ENCODE measurements at regions of chr9 and their contacts with region 1.

Region 1: DNA sequence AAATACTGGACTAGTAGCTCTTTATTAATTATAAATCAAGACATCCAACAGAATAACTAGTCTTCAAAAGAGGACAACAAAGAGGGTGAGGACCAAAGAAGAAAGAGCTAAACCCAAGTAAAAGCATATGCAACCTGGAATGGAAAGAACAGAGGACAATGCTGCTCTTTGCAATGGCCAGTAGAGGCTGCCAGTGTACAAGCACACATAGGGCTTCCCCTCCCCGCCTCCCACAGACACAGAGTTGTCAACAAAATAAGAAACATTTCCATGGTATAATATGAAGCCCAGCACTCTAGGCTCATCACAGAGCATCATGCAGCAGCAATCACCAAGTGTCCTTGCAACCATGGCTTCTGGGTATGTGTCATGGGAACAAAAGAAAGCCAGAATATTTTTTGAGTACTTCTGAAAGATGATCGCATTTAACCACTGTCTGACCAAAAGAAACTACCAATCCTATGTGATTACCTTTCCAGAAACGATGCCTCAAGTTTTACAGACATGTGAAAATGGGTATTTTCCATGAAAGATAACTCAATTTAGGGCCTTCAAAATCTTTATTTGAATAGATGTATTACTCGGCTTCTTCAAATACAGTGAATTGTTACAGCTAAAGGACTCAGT is 58.1 kb downstream of the RFX3 start:
- DNase-seq: no peak
- H3K4me3 ChIP-seq: no peak overlapping the region
- H3K27ac ChIP-seq: no peak overlapping the region
- H3K4me1 ChIP-seq: peaks cover 0 to 6% (median 1%) of the 10 kb centered on the region in 4 experiments; a peak in 4 of 7 replicates
- H3K27me3 ChIP-seq: no peaks in the 10 kb centered on the region
- CTCF ChIP-seq: peak; percentile 72 to 98 (median 72)
- EP300 ChIP-seq: no peak
- POLR2A ChIP-seq: no peak
- RAD21 ChIP-seq: peak; percentile 94 to 96

Region 2: GRCh38 chr9:3479514-3480352 is 12.0 kb after region 1 on chr9:
- CTCF ChIA-PET with region 1: interaction called, 10 read pairs
- POLR2A ChIA-PET with region 1: no interaction called
- DNase-seq: no peak
- H3K4me3 ChIP-seq: no peak overlapping the region
- H3K27ac ChIP-seq: no peak overlapping the region
- H3K4me1 ChIP-seq: peaks cover 0 to 10% (median 6%) of the 10 kb centered on the region in 4 experiments; a peak in 4 of 7 replicates
- H3K27me3 ChIP-seq: no peaks in the 10 kb centered on the region
- CTCF ChIP-seq: peak in 1 of 3 experiments; percentile 12; a peak in 1 of 4 replicates
- EP300 ChIP-seq: no peak
- POLR2A ChIP-seq: no peak
- RAD21 ChIP-seq: no peak

Measured in H1 (cell line).